ENCODE measurements at regions of chr1 and their contacts with region 1.

Region 1: DNA sequence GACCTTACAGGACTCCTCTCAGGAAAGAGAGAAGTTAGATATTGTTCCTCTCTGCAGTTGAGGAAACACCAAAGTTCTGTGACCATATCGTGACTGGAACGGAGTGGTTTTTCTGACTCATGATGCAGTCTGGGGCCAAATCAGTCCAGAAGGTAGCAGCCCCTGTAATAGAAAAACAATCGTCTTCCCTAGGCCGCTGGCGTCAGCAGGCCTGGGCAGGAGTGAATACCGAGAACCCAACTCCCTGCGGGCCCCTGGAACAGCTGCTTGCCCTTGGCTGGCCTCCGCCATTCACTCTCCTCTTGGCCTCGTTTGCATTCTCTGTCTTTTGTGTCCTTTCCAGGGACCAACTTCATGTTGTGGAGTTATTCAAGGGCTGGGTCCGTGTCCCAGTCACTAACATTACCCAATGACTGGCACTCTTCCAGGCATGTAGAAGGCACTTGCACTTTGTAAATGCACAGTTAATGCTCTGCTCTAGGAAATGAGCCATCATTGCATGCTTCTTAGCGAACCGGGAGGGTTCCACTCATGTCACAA is 10.9 kb upstream of the CD101 start:
- DNase-seq: no peak
- ATAC-seq: peak; percentile 15
- H3K4me3 ChIP-seq: no peak overlapping the region
- H3K4me3 Mint-ChIP-seq: no peak overlapping the region
- H3K27ac ChIP-seq: no peak overlapping the region
- H3K27ac Mint-ChIP-seq: no peak overlapping the region
- H3K4me1 ChIP-seq: peaks cover 6 to 48% of the 10 kb centered on the region in 2 donors
- H3K4me1 Mint-ChIP-seq: peaks cover 22 to 70% (median 67%) of the 10 kb centered on the region in 7 donors
- H3K27me3 ChIP-seq: no peaks in the 10 kb centered on the region
- H3K27me3 Mint-ChIP-seq: no peaks in the 10 kb centered on the region

Region 2: GRCh38 chr1:116724765-116725375 is 265.8 kb before region 1 on chr1:
- CTCF ChIA-PET with region 1: interaction called, 3 read pairs
- POLR2A ChIA-PET with region 1: interaction called, 3 read pairs
- intact Hi-C with region 1: loop called in 1 of 2 experiments (anchors 5 kb)
- DNase-seq: peak; percentile 45 to 74 (median 70)
- ATAC-seq: peak; percentile 77
- H3K4me3 ChIP-seq: no peak overlapping the region
- H3K4me3 Mint-ChIP-seq: no peak overlapping the region
- H3K27ac ChIP-seq: no peak overlapping the region
- H3K27ac Mint-ChIP-seq: no peak overlapping the region
- H3K4me1 ChIP-seq: no peaks in the 10 kb centered on the region
- H3K4me1 Mint-ChIP-seq: peaks cover 4 to 27% (median 13%) of the 10 kb centered on the region in 7 donors
- H3K27me3 ChIP-seq: no peaks in the 10 kb centered on the region
- H3K27me3 Mint-ChIP-seq: no peaks in the 10 kb centered on the region

Region 3: DNA sequence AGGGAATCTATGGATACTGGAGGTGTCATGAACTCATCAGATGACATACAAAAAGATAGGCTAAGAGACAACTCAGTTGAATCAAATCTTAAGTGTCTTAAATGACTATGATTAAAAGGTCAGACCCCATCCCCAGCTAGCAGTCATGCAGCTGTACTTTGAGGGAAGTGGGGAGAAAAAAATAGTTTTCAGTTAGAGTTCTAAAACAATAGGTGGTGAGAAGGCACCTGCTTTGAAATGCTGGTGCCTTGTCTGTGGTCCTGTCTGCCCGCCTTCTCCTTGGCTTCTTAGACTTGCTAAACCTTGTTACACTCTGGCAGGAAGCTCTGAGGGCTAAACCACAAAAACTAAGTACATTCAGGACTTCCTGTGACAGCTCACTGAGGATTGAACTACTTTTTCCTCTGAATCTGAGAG is 221.1 kb before region 1 on chr1:
- CTCF ChIA-PET with region 1: no interaction called
- POLR2A ChIA-PET with region 1: interaction called, 20 read pairs
- intact Hi-C with region 1: loop called in 1 of 2 experiments (anchors 2 kb)
- DNase-seq: peak in 8 of 9 donors; percentile 60 to 92 (median 86)
- ATAC-seq: peak; percentile 91
- H3K4me3 ChIP-seq: peak overlapping the region; percentile 24
- H3K4me3 Mint-ChIP-seq: peak overlapping the region; percentile 51 to 99 (median 78)
- H3K27ac ChIP-seq: peak overlapping the region; percentile 89
- H3K27ac Mint-ChIP-seq: peak overlapping the region; percentile 84 to 100 (median 97)
- H3K4me1 ChIP-seq: peaks cover 80 to 81% of the 10 kb centered on the region in 2 donors
- H3K4me1 Mint-ChIP-seq: peaks cover 64 to 97% (median 91%) of the 10 kb centered on the region in 7 donors
- H3K27me3 ChIP-seq: no peaks in the 10 kb centered on the region
- H3K27me3 Mint-ChIP-seq: no peaks in the 10 kb centered on the region

Region 4: GRCh38 chr1:116881879-116882520 is 108.7 kb before region 1 on chr1:
- CTCF ChIA-PET with region 1: interaction called, 4 read pairs
- POLR2A ChIA-PET with region 1: interaction called, 11 read pairs
- intact Hi-C with region 1: loop called in 1 of 2 experiments (anchors 1 kb)
- DNase-seq: peak in 3 of 9 donors; percentile 14 to 40 (median 19)
- ATAC-seq: no peak
- H3K4me3 ChIP-seq: no peak overlapping the region
- H3K4me3 Mint-ChIP-seq: no peak overlapping the region
- H3K27ac ChIP-seq: no peak overlapping the region
- H3K27ac Mint-ChIP-seq: peak overlapping the region in 2 of 9 donors; percentile 44 to 60
- H3K4me1 ChIP-seq: peaks cover 11 to 20% of the 10 kb centered on the region in 2 donors
- H3K4me1 Mint-ChIP-seq: peaks cover 0 to 26% (median 0%) of the 10 kb centered on the region in 7 donors
- H3K27me3 ChIP-seq: no peaks in the 10 kb centered on the region
- H3K27me3 Mint-ChIP-seq: no peaks in the 10 kb centered on the region

Region 5: DNA sequence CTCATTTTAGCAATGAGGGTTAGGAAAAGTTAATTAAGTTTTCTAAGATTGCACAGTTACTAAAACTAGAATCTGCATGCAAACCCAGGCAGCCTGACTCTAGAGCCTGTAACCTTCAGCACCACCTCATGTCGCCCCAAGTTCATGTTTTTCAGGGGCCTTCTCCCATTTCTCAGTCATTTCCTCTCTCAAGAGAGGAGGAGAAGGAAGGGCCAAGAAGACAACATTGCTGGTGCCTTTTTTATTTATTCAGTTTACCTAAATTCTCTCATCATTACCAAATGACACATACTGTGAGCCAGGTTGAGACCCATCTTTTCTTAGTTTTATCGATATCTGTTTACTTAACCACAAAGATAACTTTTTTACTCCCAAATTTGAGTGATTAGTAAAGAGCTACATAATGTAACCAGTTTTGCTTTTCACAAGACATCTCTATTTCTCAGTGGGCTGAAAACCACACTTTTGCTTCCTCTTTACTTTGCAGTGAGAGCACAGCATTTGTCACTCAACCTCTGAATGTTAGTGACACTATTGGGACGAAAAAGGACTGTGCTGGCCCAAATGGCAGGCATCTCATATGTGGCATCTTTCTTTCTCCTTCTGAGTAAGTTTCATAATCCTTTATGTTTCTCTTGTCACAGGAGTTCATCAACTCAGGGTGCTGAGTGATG is 10.7 kb after region 1 on chr1 and contains the start of gene CD101:
- CTCF ChIA-PET with region 1: interaction called, 12 read pairs
- POLR2A ChIA-PET with region 1: interaction called, 27 read pairs
- intact Hi-C with region 1: loop called (anchors 1 to 2 kb)
- DNase-seq: peak in 4 of 9 donors; percentile 18 to 39 (median 32)
- ATAC-seq: peak; percentile 72
- H3K4me3 ChIP-seq: peak within 1 kb of the TSS; percentile 17
- H3K4me3 Mint-ChIP-seq: peak within 1 kb of the TSS; percentile 30 to 72 (median 60)
- H3K27ac ChIP-seq: peak within 1 kb of the TSS; percentile 60
- H3K27ac Mint-ChIP-seq: peak within 1 kb of the TSS; percentile 84 to 95 (median 87)
- H3K4me1 ChIP-seq: peaks cover 0 to 48% of the 10 kb centered on the region in 2 donors
- H3K4me1 Mint-ChIP-seq: peaks cover 36 to 72% (median 59%) of the 10 kb centered on the region in 7 donors
- H3K27me3 ChIP-seq: no peaks in the 10 kb centered on the region
- H3K27me3 Mint-ChIP-seq: no peaks in the 10 kb centered on the region
- total RNA-seq, gene CD101: 3.9 to 15.4 (median 10.3) TPM

Region 6: GRCh38 chr1:117121776-117122697 is 131.4 kb after region 1 on chr1:
- CTCF ChIA-PET with region 1: no interaction called
- POLR2A ChIA-PET with region 1: no interaction called
- intact Hi-C with region 1: loop called in 1 of 2 experiments (anchors 10 kb)
- DNase-seq: peak; percentile 64 to 81 (median 74)
- ATAC-seq: peak; percentile 90
- H3K4me3 ChIP-seq: peak overlapping the region; percentile 97
- H3K4me3 Mint-ChIP-seq: peak overlapping the region; percentile 83 to 90 (median 87)
- H3K27ac ChIP-seq: peak overlapping the region; percentile 61
- H3K27ac Mint-ChIP-seq: peak overlapping the region in 2 of 9 donors; percentile 16 to 53
- H3K4me1 ChIP-seq: peaks cover 0 to 4% of the 10 kb centered on the region in 2 donors
- H3K4me1 Mint-ChIP-seq: peaks cover 0 to 13% (median 4%) of the 10 kb centered on the region in 7 donors
- H3K27me3 ChIP-seq: no peaks in the 10 kb centered on the region
- H3K27me3 Mint-ChIP-seq: peaks cover 5 to 21% (median 6%) of the 10 kb centered on the region in 5 donors